ENCODE measurements at regions of chr6 and their contacts with region 1.

Region 1: GRCh38 chr6:27617700-27618689 is 145.1 kb upstream of the ZNF184 start:
- DNase-seq: peak; percentile 59 to 78
- ATAC-seq: peak; percentile 91 to 94
- H3K4me3 ChIP-seq: peak overlapping the region; percentile 56
- H3K27ac ChIP-seq: peak overlapping the region; percentile 59 to 84
- H3K4me1 ChIP-seq: peaks cover 7% of the 10 kb centered on the region; the same call in 1 of the 3 replicates
- CTCF ChIP-seq: peak; percentile 29
- EP300 ChIP-seq: no peak
- POLR2A ChIP-seq: no peak
- RAD21 ChIP-seq: peak in 1 of 2 experiments; percentile 39; a peak in 2 of 5 replicates

Region 2: DNA sequence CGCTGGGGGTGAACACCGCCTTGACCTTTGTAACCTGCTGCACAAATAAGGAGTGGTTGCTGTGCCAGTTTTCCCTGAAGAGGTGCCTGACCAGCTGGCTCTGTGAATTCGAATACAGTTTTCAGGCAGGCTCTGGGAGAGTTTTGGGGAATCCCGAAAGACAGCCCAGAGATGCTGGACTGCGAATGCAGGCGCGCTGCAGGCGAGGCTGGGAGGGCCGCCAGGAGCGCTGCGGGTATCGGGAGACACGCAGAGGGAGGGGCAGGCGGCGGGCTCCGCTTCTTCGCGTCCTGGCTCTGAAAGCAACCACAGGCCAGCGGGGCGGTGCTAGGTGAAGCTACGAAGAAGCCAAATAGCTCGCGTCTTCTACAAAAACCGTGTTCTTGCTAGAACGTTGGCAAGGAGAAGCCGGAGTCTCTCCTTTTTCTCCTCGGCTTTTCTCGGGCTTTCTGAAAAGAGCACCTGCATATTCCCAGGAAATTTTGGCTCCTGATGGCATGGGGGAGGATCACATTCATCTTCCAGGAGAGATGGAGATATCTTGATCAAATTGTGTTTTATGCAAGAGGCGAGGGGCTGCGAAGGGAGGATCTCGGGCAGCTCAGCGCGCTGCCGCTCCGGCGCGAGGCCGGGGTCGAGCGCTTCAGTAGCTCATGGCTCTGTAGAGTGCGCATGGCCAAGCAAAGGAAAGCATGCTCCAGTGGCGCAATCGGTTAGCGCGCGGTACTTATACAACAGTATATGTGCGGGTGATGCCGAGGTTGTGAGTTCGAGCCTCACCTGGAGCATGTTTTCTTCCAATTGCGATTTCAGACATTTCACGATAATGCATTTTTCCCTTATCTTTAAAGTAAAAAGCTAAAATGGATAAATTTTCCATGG is 13.0 kb after region 1 on chr6:
- CTCF ChIA-PET with region 1: interaction called, 27 read pairs
- POLR2A ChIA-PET with region 1: interaction called, 7 read pairs
- DNase-seq: peak; percentile 45 to 88
- ATAC-seq: peak; percentile 90 to 92
- H3K4me3 ChIP-seq: peak overlapping the region; percentile 64
- H3K27ac ChIP-seq: peak overlapping the region; percentile 79 to 86
- H3K4me1 ChIP-seq: peaks cover 35% of the 10 kb centered on the region
- CTCF ChIP-seq: no peak
- EP300 ChIP-seq: no peak
- POLR2A ChIP-seq: no peak
- RAD21 ChIP-seq: no peak

Region 3: DNA sequence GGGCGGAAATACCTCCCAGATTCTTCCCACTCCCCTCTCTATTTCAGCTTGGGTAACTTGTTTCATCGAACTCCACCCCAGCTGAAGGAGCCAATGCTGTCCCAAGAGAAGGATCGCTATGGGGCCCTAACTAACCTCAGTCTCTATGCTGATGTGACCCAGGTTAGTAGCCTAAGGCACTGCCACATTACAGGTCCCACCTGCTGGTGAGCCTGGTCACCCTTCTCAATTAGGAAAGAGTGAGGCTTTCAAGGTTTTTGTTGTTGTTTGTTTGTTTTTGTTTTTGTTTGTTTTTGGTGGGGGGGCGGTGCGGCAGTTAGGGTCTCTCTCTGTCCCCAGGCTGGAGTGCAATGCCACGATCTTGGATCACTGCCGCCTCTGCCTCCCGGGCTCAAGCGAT is 125.8 kb after region 1 on chr6:
- CTCF ChIA-PET with region 1: no interaction called
- POLR2A ChIA-PET with region 1: no interaction called
- DNase-seq: no peak
- ATAC-seq: no peak
- H3K4me3 ChIP-seq: no peak overlapping the region
- H3K27ac ChIP-seq: no peak overlapping the region
- H3K4me1 ChIP-seq: no peaks in the 10 kb centered on the region
- CTCF ChIP-seq: no peak
- EP300 ChIP-seq: no peak
- POLR2A ChIP-seq: no peak
- RAD21 ChIP-seq: no peak